ENCODE measurements at regions of chr19 and their contacts with region 1.

Region 1: DNA sequence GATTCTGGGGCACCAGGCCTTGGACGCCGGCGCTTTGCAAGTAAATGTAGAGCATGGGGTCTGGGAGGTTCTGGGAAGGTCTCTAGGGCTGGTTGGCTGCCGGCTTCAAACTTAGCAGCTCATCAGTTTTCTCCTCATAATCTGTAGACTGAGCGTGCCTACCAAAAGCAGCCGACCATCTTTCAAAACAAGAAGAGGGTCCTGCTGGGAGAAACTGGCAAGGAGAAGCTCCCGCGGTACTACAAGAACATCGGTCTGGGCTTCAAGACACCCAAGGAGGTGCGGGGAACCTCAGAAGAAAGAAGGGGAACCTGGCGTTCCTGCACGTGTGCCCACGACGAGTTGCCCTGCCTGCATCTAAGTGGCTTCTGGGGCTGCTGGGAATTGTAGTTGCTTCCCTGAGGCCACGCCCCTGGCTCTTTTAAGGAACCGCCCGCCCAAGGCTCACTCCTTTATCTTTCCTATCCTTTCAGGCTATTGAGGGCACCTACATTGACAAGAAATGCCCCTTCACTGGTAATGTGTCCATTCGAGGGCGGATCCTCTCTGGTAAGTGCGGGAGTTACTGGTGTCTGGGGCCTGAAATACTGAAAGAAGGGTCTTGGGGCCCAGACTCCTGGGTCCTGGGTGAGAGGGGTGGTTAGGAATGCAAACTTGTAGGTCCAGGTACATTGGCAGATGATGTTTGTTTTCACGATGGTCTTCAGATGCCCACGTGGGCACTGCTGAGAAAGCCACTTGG is 984 bp downstream of the RPS11 start:
- DNase-seq: peak; percentile 55 to 85 (median 77)
- ATAC-seq: peak; percentile 20
- H3K4me3 ChIP-seq: peak overlapping the region; percentile 97
- H3K4me3 Mint-ChIP-seq: peak overlapping the region; percentile 96 to 100 (median 99)
- H3K27ac ChIP-seq: peak overlapping the region; percentile 99
- H3K27ac Mint-ChIP-seq: peak overlapping the region; percentile 91 to 100 (median 98)
- H3K4me1 ChIP-seq: peaks cover 21 to 40% of the 10 kb centered on the region in 2 donors
- H3K4me1 Mint-ChIP-seq: peaks cover 32 to 64% (median 50%) of the 10 kb centered on the region in 7 donors
- H3K27me3 ChIP-seq: no peaks in the 10 kb centered on the region
- H3K27me3 Mint-ChIP-seq: peaks cover 0 to 12% (median 0%) of the 10 kb centered on the region in 5 donors

Region 2: DNA sequence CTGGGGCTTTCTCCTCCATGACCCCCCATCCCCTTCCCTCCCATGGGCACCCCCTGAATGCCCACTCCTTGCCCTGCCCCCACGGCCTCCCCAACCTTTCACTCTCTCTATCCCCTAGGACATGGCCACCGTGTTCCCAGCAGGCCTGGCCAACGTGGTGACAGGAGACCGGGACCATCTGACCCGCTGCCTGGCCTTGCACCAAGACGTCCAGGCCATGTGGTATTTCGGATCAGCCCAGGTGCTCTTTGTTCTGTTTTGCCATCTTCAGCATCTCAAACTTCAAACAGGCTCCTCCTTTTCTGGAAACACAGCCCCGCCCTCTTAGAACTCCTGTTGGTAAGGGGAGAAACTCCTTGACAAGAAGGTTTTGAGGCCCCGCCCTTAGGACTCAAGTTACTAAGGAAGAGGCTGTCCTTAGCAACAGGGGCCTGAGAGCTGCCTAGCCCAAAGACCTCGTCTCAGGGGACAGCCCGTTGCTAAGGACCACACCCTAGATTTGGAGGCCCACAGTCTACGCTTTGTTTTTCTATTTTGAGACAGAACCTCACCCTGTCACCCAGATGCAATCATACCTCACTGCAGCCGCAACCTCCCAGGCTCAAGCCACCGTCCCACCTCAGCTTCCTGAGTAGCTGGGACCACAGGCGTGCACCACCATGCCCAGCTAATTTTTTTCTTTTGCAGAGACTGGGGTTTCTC is 28.3 kb before region 1 on chr19:
- CTCF ChIA-PET with region 1: interaction called, 4 read pairs
- POLR2A ChIA-PET with region 1: interaction called, 28 read pairs
- intact Hi-C with region 1: loop called (anchors 1 kb)
- DNase-seq: peak; percentile 59 to 98 (median 95)
- ATAC-seq: peak; percentile 87
- H3K4me3 ChIP-seq: peak overlapping the region; percentile 10
- H3K4me3 Mint-ChIP-seq: peak overlapping the region; percentile 73 to 91 (median 81)
- H3K27ac ChIP-seq: peak overlapping the region; percentile 97
- H3K27ac Mint-ChIP-seq: peak overlapping the region; percentile 94 to 100 (median 100)
- H3K4me1 ChIP-seq: peaks cover 55 to 59% of the 10 kb centered on the region in 2 donors
- H3K4me1 Mint-ChIP-seq: peaks cover 23 to 56% (median 40%) of the 10 kb centered on the region in 7 donors
- H3K27me3 ChIP-seq: no peaks in the 10 kb centered on the region
- H3K27me3 Mint-ChIP-seq: no peaks in the 10 kb centered on the region

Region 3: DNA sequence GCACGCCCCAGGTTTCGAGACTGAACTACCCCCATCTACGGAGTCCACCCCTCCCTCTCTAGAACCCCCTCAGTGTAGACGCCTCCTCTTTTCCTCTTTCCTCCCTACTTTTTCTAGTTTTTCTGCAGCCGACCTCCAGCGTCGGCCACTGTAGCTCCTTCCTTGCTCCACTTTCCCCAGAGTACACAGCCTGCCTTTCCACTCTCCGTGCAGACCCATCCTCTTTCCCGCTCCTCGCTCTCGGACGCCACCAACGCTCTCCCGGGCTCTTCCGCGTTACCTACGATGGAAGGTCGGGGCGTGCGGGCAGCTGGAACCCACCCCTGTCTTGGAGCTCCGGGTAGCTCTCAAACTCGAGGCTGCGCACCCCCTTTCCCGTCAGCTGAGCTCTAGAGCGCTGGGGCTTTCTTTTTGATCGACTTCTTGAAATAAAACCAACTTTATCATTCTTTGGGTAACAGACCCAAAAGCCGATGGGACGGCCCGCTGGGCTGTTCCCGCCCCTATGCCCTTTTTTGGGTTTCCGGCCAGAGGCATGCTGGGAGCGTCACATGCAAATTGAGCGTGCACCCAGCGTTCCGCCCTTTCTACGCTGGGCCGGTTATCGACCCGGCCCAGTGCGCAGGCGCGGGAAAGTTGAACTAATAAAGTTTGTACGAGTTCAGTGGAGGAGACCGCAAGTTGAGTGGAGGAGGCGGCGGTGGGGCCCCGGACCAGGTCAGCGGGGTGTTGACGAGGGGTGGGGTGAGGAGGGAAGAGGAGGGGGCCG is 168.3 kb after region 1 on chr19 and contains the starts of genes BCL2L12 and IRF3:
- CTCF ChIA-PET with region 1: interaction called, 4 read pairs
- POLR2A ChIA-PET with region 1: interaction called, 11 read pairs
- intact Hi-C with region 1: no loop called
- DNase-seq: peak; percentile 99
- ATAC-seq: peak; percentile 90
- H3K4me3 ChIP-seq: peak within 1 kb of the TSS; percentile 95
- H3K4me3 Mint-ChIP-seq: peak within 1 kb of the TSS; percentile 97 to 100 (median 99)
- H3K27ac ChIP-seq: peak within 1 kb of the TSS; percentile 80
- H3K27ac Mint-ChIP-seq: peak within 1 kb of the TSS; percentile 96 to 99 (median 97)
- H3K4me1 ChIP-seq: peaks cover 23% of the 10 kb centered on the region in 2 donors
- H3K4me1 Mint-ChIP-seq: peaks cover 24 to 47% (median 39%) of the 10 kb centered on the region in 7 donors
- H3K27me3 ChIP-seq: no peaks in the 10 kb centered on the region
- H3K27me3 Mint-ChIP-seq: peaks cover 0 to 2% (median 0%) of the 10 kb centered on the region in 5 donors
- total RNA-seq, gene BCL2L12: 11.3 to 57.2 (median 22.6) TPM
- total RNA-seq, gene IRF3: 176 to 346 (median 212) TPM